Tibial artery (tissue), 4 donors: ENCODE measurements at regions of chr21 and their contacts with region 1.

Region 1: GRCh38 chr21:36021251-36021837 is 39.0 kb downstream of the SETD4 start:
- DNase-seq: no peak
- H3K4me3 ChIP-seq: no peak overlapping the region
- H3K27ac ChIP-seq: no peak overlapping the region
- H3K4me1 ChIP-seq: no peaks in the 10 kb centered on the region
- H3K27me3 ChIP-seq: peaks cover 0 to 7% of the 10 kb centered on the region in 2 donors
- CTCF ChIP-seq: no peak

Region 2: GRCh38 chr21:34745557-34746255 is 1275.6 kb before region 1 on chr21:
- intact Hi-C with region 1: loop called (anchors 5 kb)
- DNase-seq: peak; percentile 64 to 75
- H3K4me3 ChIP-seq: no peak overlapping the region
- H3K27ac ChIP-seq: no peak overlapping the region
- H3K4me1 ChIP-seq: peaks cover 0 to 14% (median 0%) of the 10 kb centered on the region in 4 donors
- H3K27me3 ChIP-seq: peaks cover 0 to 5% of the 10 kb centered on the region in 2 donors
- CTCF ChIP-seq: peak; percentile 82 to 90

Region 3: GRCh38 chr21:36446301-36446700 is 425.0 kb after region 1 on chr21:
- intact Hi-C with region 1: no loop called
- DNase-seq: no peak
- H3K4me3 ChIP-seq: no peak overlapping the region
- H3K27ac ChIP-seq: no peak overlapping the region
- H3K4me1 ChIP-seq: no peaks in the 10 kb centered on the region
- H3K27me3 ChIP-seq: no peaks in the 10 kb centered on the region
- CTCF ChIP-seq: no peak